ENCODE measurements at regions of chr7 and their contacts with region 1.

Region 1: GRCh38 chr7:101542527-101543241 is 86.4 kb downstream of the MYL10 start:
- DNase-seq: peak; percentile 87
- H3K4me3 ChIP-seq: no peak overlapping the region
- H3K27ac ChIP-seq: no peak overlapping the region
- H3K4me1 ChIP-seq: no peaks in the 10 kb centered on the region
- H3K27me3 ChIP-seq: no peaks in the 10 kb centered on the region
- CTCF ChIP-seq: peak; percentile 87

Region 2: DNA sequence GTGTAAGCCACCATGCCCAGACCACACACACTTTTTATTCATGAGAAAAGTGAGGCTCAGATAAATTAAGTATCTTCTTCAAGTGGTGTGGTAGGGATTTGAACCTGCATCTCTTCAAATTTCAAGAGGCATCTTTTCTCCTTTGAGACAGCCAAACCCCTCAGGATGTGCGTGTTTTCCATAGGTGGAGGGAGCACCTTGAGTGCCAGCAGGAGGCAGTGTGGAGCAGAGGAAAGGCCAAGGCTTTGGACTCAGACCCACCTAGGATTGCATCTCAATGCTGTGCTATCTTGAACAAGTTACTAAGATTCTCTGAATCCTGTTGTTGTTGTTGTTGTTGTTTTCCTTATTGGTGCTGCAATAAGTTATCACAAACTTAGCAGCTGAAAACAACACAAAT is 126.6 kb after region 1 on chr7:
- intact Hi-C with region 1: loop called (anchors 10 kb)
- DNase-seq: no peak
- H3K4me3 ChIP-seq: no peak overlapping the region
- H3K27ac ChIP-seq: no peak overlapping the region
- H3K4me1 ChIP-seq: no peaks in the 10 kb centered on the region
- H3K27me3 ChIP-seq: no peaks in the 10 kb centered on the region
- CTCF ChIP-seq: peak; percentile 48

Region 3: GRCh38 chr7:102272075-102272917 is 729.6 kb after region 1 on chr7:
- intact Hi-C with region 1: loop called (anchors 2 kb)
- DNase-seq: peak; percentile 82
- H3K4me3 ChIP-seq: no peak overlapping the region
- H3K27ac ChIP-seq: no peak overlapping the region
- H3K4me1 ChIP-seq: peaks cover 6% of the 10 kb centered on the region
- H3K27me3 ChIP-seq: no peaks in the 10 kb centered on the region
- CTCF ChIP-seq: peak; percentile 88

Measured in colonic mucosa (tissue), 4 donors.